K562 (cell line): ENCODE measurements at regions of chr21 and their contacts with region 1.

Region 1: DNA sequence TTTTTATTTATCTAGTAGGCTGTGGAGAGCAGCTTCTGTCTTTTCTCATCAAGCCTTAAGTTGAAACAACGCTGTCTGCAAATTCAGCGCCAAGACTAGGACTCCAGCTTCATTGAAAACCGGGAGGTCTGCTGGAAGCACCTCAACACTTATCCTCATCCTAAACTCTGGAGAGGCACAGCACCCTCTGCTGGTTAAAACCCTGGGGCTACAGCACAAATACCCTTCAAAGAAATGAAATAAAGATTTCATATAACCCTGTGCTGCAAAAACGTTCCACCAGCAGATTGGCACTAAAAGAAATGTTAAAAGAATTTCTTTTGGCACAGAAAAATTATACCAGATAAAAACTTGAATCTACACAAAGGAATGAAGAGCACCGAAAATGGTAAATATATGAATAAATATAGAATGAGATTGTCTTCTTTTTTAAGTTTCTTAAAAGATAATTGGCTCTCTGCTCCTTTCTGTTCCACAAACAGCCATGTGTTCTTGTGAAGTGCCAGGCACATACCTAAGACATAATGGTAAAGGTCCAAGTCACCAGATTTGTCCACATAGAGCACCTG is 227.7 kb upstream of the SAMSN1 start:
- DNase-seq: peak; percentile 68 to 90 (median 74)
- ATAC-seq: peak; percentile 95
- H3K4me3 ChIP-seq: no peak overlapping the region
- H3K27ac ChIP-seq: no peak overlapping the region; the same call in 2 of the 3 replicates
- H3K4me1 ChIP-seq: peaks cover 0 to 18% of the 10 kb centered on the region in 2 experiments; a peak in 3 of 5 replicates
- H3K27me3 ChIP-seq: no peaks in the 10 kb centered on the region
- CTCF ChIP-seq: peak; percentile 71 to 91 (median 79)
- EP300 ChIP-seq: 0 out of 2 replicates have a peak, but pooled peaks have one; percentile 47
- POLR2A ChIP-seq: no peak
- RAD21 ChIP-seq: peak; percentile 87 to 93

Region 2: GRCh38 chr21:14306151-14306907 is 467.5 kb before region 1 on chr21:
- CTCF ChIA-PET with region 1: interaction called, 4 read pairs
- POLR2A ChIA-PET with region 1: no interaction called
- in situ Hi-C with region 1: no loop called
- intact Hi-C with region 1: loop called (anchors 2 kb)
- DNase-seq: peak in 1 of 4 experiments; percentile 26
- ATAC-seq: 0 out of 3 replicates have a peak, but pooled peaks have one; percentile 28
- H3K4me3 ChIP-seq: no peak overlapping the region
- H3K27ac ChIP-seq: no peak overlapping the region
- H3K4me1 ChIP-seq: no peaks in the 10 kb centered on the region
- H3K27me3 ChIP-seq: no peaks in the 10 kb centered on the region; a peak in 1 of 5 replicates
- CTCF ChIP-seq: peak in 2 of 3 experiments; percentile 21 to 62; a peak in 4 of 6 replicates
- EP300 ChIP-seq: no peak
- POLR2A ChIP-seq: no peak
- RAD21 ChIP-seq: peak; percentile 47 to 76; a peak in 3 of 4 replicates